ENCODE measurements at regions of chr5 and their contacts with region 1.

Region 1: GRCh38 chr5:81971712-81972495 is at the start of gene ATG10:
- DNase-seq: peak; percentile 78 to 93 (median 84)
- ATAC-seq: peak; percentile 95
- H3K4me3 ChIP-seq: peak within 1 kb of the TSS; percentile 67
- H3K4me3 Mint-ChIP-seq: peak within 1 kb of the TSS; percentile 91 to 100 (median 97)
- H3K27ac ChIP-seq: peak within 1 kb of the TSS; percentile 97
- H3K27ac Mint-ChIP-seq: peak within 1 kb of the TSS; percentile 95 to 99 (median 99)
- H3K4me1 ChIP-seq: peaks cover 5 to 10% of the 10 kb centered on the region in 2 donors
- H3K4me1 Mint-ChIP-seq: peaks cover 9 to 40% (median 33%) of the 10 kb centered on the region in 7 donors
- H3K27me3 ChIP-seq: no peaks in the 10 kb centered on the region
- H3K27me3 Mint-ChIP-seq: no peaks in the 10 kb centered on the region
- total RNA-seq, gene ATG10: 6.4 to 9.6 (median 8.2) TPM

Region 2: GRCh38 chr5:79990598-79991507 is 1981.1 kb before region 1 on chr5 and contains the start of gene MTX3:
- CTCF ChIA-PET with region 1: no interaction called
- POLR2A ChIA-PET with region 1: no interaction called
- intact Hi-C with region 1: loop called (anchors 2 to 5 kb)
- DNase-seq: peak; percentile 65 to 85 (median 82)
- ATAC-seq: peak; percentile 97
- H3K4me3 ChIP-seq: peak within 1 kb of the TSS; percentile 80
- H3K4me3 Mint-ChIP-seq: peak within 1 kb of the TSS; percentile 76 to 93 (median 88)
- H3K27ac ChIP-seq: peak within 1 kb of the TSS; percentile 75
- H3K27ac Mint-ChIP-seq: peak within 1 kb of the TSS; percentile 82 to 95 (median 92)
- H3K4me1 ChIP-seq: peaks cover 17 to 18% of the 10 kb centered on the region in 2 donors
- H3K4me1 Mint-ChIP-seq: peaks cover 17 to 47% (median 36%) of the 10 kb centered on the region in 7 donors
- H3K27me3 ChIP-seq: no peaks in the 10 kb centered on the region
- H3K27me3 Mint-ChIP-seq: peaks cover 0 to 13% (median 8%) of the 10 kb centered on the region in 5 donors
- total RNA-seq, gene MTX3: 12.9 to 31.0 (median 24.4) TPM

Region 3: GRCh38 chr5:81425569-81425968 is 546.3 kb before region 1 on chr5:
- CTCF ChIA-PET with region 1: interaction called, 3 read pairs
- POLR2A ChIA-PET with region 1: no interaction called
- intact Hi-C with region 1: loop called (anchors 5 kb)
- DNase-seq: peak in 7 of 9 donors; percentile 15 to 72 (median 58)
- ATAC-seq: peak; percentile 73
- H3K4me3 ChIP-seq: no peak overlapping the region
- H3K4me3 Mint-ChIP-seq: peak overlapping the region in 2 of 10 donors; percentile 6 to 8
- H3K27ac ChIP-seq: no peak overlapping the region
- H3K27ac Mint-ChIP-seq: peak overlapping the region in 6 of 9 donors; percentile 9 to 65 (median 48)
- H3K4me1 ChIP-seq: peaks cover 0 to 6% of the 10 kb centered on the region in 2 donors
- H3K4me1 Mint-ChIP-seq: peaks cover 3 to 25% (median 13%) of the 10 kb centered on the region in 7 donors
- H3K27me3 ChIP-seq: no peaks in the 10 kb centered on the region
- H3K27me3 Mint-ChIP-seq: no peaks in the 10 kb centered on the region

Region 4: DNA sequence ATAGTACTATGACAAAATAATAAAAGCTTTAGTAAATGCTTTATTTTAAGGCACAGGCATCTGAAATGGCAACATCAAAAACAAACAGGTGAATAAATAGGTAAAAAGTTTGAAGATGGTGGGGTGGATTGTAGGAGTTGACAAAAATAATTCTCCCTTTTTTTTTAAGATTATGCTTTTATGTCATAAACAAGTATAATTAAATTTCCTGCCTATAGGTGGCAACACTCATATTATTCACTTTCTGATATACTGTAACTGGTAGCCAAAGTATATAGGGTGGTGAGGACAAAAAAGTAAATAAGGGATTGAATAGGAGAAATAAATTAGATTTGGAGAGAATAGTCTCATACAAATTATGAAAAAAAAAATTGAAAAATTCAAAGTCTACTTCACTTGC is 457.9 kb before region 1 on chr5:
- CTCF ChIA-PET with region 1: no interaction called
- POLR2A ChIA-PET with region 1: no interaction called
- intact Hi-C with region 1: loop called (anchors 1 to 10 kb)
- DNase-seq: peak in 4 of 9 donors; percentile 20 to 32 (median 22)
- ATAC-seq: peak; percentile 55
- H3K4me3 ChIP-seq: no peak overlapping the region
- H3K4me3 Mint-ChIP-seq: no peak overlapping the region
- H3K27ac ChIP-seq: no peak overlapping the region
- H3K27ac Mint-ChIP-seq: peak overlapping the region in 2 of 9 donors; percentile 8 to 18
- H3K4me1 ChIP-seq: no peaks in the 10 kb centered on the region
- H3K4me1 Mint-ChIP-seq: peaks cover 0 to 24% (median 6%) of the 10 kb centered on the region in 7 donors
- H3K27me3 ChIP-seq: no peaks in the 10 kb centered on the region
- H3K27me3 Mint-ChIP-seq: no peaks in the 10 kb centered on the region

Region 5: DNA sequence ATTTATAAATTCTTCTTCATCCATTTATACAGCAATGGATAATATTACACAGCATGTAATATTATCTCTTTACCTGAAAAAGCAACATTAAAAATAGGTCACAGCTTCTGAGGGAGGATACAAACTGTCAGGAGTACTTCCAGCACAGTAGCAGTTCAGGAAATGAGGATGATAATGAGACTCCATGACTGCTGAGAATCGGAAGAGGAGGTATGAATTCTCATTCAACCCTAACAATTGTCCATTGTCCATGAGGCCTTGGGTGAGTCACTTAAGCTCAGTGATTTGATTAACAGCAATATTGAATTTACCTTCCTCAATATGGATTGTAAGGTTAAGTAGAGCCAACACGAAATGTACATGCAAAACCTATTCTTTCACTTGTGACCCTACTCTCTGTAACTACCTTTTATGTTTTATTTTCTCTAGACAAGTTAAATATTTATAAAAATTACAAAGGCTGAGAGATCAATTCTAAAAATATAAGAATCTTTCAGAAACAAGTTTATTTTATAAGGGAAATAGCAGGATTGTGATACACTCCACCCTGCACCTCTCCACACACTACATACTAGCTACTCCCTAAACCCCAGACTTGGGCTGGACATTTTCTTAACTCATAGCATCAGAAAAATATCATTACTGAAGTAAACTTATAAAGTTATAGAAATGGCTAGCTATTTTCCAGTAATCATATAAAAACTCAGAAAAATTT is 418.9 kb before region 1 on chr5:
- CTCF ChIA-PET with region 1: no interaction called
- POLR2A ChIA-PET with region 1: no interaction called
- intact Hi-C with region 1: no loop called
- DNase-seq: no peak
- ATAC-seq: no peak
- H3K4me3 ChIP-seq: no peak overlapping the region
- H3K4me3 Mint-ChIP-seq: no peak overlapping the region
- H3K27ac ChIP-seq: no peak overlapping the region
- H3K27ac Mint-ChIP-seq: peak overlapping the region in 2 of 9 donors; percentile 33 to 48
- H3K4me1 ChIP-seq: peaks cover 0 to 3% of the 10 kb centered on the region in 2 donors
- H3K4me1 Mint-ChIP-seq: peaks cover 4 to 42% (median 30%) of the 10 kb centered on the region in 7 donors
- H3K27me3 ChIP-seq: no peaks in the 10 kb centered on the region
- H3K27me3 Mint-ChIP-seq: no peaks in the 10 kb centered on the region

Region 6: GRCh38 chr5:82278095-82278918 is 306.4 kb after region 1 on chr5 and contains the start of gene RPS23:
- CTCF ChIA-PET with region 1: no interaction called
- POLR2A ChIA-PET with region 1: interaction called, 3 read pairs
- intact Hi-C with region 1: loop called (anchors 1 kb)
- DNase-seq: peak; percentile 78 to 90 (median 85)
- ATAC-seq: peak; percentile 96
- H3K4me3 ChIP-seq: peak within 1 kb of the TSS; percentile 72
- H3K4me3 Mint-ChIP-seq: peak within 1 kb of the TSS; percentile 87 to 98 (median 94)
- H3K27ac ChIP-seq: peak within 1 kb of the TSS; percentile 80
- H3K27ac Mint-ChIP-seq: peak within 1 kb of the TSS; percentile 94 to 99 (median 96)
- H3K4me1 ChIP-seq: peaks cover 12 to 16% of the 10 kb centered on the region in 2 donors
- H3K4me1 Mint-ChIP-seq: peaks cover 13 to 65% (median 39%) of the 10 kb centered on the region in 7 donors
- H3K27me3 ChIP-seq: no peaks in the 10 kb centered on the region
- H3K27me3 Mint-ChIP-seq: no peaks in the 10 kb centered on the region
- total RNA-seq, gene RPS23: 2,233 to 4,335 (median 3,874) TPM